BJ (cell line): ENCODE measurements at regions of chr19 and their contacts with region 1.

Region 1: DNA sequence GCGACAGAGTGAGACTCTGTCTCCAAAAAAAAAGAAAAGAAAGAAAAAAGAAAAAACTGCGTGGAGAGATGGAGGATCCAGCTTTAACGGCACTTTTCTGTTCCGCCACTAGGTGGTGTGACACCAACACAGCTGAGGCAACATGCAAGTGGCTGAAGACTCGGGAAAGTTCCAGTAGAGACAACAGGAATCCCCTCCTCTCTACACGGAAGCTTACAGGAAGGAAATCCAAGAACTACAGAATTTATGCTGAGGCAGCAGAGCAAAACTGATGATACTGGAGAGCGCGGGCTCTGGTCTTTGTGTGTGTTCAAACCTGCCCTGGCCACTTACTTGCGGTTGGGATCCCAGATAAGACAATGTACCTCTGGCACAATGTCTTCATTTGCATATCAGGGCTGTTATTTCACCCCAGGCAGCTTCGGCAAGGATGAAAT is 9.9 kb downstream of the RANBP3 start:
- DNase-seq: no peak
- H3K4me3 ChIP-seq: no peak overlapping the region
- H3K27me3 ChIP-seq: no peaks in the 10 kb centered on the region
- CTCF ChIP-seq: peak; percentile 86

Region 2: DNA sequence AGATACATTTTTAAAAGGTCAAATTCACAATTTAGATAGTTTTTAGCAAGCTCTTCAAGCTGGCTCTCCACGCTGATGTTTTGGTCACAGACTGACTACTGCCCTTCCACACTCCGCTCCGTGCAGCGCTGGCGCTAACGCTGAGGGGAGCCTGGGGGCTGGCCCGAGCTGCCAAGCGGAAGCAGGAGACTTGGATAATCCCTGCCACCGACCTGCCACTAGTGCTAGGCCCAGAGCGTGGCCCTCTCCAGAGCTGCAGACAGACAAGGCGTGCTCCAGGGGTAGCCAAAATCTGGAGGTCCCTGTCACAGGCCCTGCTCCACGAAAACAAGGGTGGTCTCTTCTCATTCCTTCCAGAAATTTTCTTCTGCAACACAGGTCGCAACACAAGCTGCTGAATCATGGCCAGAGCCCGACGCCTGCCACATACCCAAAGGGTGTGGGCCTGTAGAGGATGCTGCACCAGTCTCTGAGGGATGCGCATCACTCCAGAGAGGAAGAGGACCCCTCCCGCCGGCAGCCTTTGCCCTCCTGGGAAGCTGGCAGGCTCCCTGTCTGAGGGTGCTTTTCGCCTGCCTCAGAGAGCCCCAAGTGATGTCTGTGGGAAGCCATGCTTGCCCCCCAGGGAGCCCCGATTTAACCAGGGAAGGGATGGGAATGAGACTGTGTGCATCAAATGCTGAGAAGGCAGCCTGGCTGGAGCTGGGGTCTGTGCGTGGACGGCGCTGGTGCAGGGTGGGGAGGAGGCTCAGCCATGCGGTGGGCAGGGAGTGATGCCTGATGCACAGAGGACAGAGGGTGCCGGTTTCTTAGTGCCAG is 32.3 kb before region 1 on chr19:
- CTCF ChIA-PET with region 1: interaction called, 10 read pairs
- POLR2A ChIA-PET with region 1: no interaction called
- DNase-seq: no peak
- H3K4me3 ChIP-seq: no peak overlapping the region
- H3K27me3 ChIP-seq: no peaks in the 10 kb centered on the region
- CTCF ChIP-seq: no peak

Region 3: DNA sequence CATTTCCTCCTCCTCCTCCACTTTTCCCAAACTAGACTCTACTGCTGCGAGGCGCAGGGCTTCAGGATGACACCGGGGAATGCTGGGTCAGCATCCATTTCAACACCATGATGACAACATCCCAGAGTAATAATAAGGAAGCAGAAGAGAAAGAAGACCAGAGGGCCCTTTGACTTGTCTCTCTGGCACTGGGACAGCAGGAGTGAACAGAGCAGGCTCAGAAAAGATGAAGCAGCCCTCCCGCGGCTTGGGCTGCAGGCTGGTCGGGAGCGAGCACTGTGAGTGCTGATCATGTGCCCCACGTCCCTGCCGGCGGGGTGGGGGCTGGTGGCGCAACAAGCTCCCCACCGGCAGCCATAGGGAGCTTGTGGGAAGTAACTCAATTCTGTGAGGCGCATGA is 20.6 kb before region 1 on chr19:
- CTCF ChIA-PET with region 1: interaction called, 78 read pairs
- POLR2A ChIA-PET with region 1: no interaction called
- DNase-seq: no peak
- H3K4me3 ChIP-seq: no peak overlapping the region
- H3K27me3 ChIP-seq: no peaks in the 10 kb centered on the region
- CTCF ChIP-seq: no peak

Region 4: DNA sequence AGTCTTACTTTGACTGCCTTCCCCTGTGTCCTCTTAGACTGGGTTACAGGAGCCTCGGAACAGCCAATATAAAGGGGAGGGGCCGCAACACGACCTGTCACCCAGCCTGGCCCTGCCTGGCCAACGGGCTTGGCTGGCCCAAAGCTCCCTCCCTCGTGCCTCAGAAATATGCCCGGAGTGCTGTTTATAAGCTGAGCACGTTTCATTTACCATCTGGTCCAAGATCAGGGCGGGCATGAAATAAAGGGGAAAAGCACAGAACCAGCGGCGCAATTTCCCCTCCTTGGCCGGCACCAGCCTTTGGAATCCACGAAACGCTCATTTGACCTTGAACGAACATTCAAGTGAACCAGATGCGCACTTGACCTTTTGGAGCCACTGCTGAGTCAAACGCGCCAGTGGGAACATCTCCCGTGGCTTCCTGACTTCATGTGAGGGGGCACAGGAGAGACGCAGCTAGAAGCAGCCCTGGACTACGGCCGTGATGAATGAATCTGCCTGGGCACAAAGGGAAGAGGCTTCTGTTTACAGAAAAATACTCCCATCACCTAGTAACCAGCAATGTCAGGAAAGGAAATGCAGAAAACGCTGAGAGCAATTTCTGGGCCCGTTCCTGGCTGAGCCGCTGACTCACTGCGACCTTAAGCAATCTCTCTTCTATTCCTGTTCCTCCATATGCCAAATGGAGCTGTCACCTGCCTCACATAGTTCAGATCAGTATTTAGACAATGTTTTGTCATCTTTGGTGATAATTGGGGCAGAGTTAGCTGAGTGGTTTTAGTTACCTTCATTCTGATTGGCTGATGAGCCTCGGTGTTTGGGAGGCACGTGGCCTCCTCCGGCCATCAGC is 89.0 kb after region 1 on chr19:
- CTCF ChIA-PET with region 1: no interaction called
- POLR2A ChIA-PET with region 1: no interaction called
- DNase-seq: peak; percentile 95
- H3K4me3 ChIP-seq: no peak overlapping the region
- H3K27me3 ChIP-seq: no peaks in the 10 kb centered on the region
- CTCF ChIP-seq: no peak